ENCODE measurements at regions of chr17 and their contacts with region 1.

Region 1: GRCh38 chr17:63549946-63550807 is at the start of gene DCAF7:
- H3K4me3 Mint-ChIP-seq: peak within 1 kb of the TSS; percentile 98
- H3K27ac Mint-ChIP-seq: peak within 1 kb of the TSS; percentile 97
- H3K4me1 Mint-ChIP-seq: peaks cover 44% of the 10 kb centered on the region
- H3K27me3 Mint-ChIP-seq: no peaks in the 10 kb centered on the region

Region 2: DNA sequence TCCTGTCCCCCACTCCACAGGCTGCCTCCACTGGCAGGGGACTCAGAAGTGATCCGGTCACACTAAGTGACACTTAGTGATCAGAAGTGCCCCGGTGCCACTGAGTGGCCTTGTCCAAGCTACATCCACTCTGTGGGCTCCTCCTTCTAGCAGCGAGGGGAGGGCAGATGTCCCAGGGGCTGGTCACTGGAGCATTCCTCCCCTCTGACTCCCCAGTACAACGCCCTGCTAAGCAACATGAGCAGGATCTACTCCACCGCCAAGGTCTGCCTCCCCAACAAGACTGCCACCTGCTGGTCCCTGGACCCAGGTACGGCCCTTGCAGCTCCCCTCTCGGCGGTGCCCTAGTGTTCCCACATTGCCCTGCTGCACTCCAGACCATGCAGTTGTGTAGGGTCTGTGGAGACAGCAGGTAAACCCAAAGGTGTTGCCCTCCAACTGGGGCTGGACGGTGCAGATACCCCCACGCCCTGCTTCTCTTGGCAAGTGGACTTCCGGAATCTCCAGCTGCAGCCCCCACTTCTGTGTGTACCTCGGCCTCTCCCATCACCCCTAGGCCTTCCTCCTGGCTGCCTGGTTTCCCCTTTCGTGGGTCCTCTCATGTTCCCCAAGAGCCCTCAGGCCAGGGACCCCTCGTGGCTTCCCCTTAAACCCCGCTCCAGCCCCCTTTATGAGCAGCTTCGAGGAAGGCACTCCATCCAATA is 71.2 kb before region 1 on chr17:
- intact Hi-C with region 1: no loop called
- H3K4me3 Mint-ChIP-seq: peak overlapping the region; percentile 97
- H3K27ac Mint-ChIP-seq: peak overlapping the region; percentile 78
- H3K4me1 Mint-ChIP-seq: peaks cover 80% of the 10 kb centered on the region
- H3K27me3 Mint-ChIP-seq: peaks cover 18% of the 10 kb centered on the region

Region 3: GRCh38 chr17:63503334-63503692 is 46.9 kb before region 1 on chr17:
- intact Hi-C with region 1: loop called (anchors 5 kb)
- H3K4me3 Mint-ChIP-seq: no peak overlapping the region
- H3K27ac Mint-ChIP-seq: peak overlapping the region; percentile 83
- H3K4me1 Mint-ChIP-seq: peaks cover 66% of the 10 kb centered on the region
- H3K27me3 Mint-ChIP-seq: peaks cover 5% of the 10 kb centered on the region

Region 4: DNA sequence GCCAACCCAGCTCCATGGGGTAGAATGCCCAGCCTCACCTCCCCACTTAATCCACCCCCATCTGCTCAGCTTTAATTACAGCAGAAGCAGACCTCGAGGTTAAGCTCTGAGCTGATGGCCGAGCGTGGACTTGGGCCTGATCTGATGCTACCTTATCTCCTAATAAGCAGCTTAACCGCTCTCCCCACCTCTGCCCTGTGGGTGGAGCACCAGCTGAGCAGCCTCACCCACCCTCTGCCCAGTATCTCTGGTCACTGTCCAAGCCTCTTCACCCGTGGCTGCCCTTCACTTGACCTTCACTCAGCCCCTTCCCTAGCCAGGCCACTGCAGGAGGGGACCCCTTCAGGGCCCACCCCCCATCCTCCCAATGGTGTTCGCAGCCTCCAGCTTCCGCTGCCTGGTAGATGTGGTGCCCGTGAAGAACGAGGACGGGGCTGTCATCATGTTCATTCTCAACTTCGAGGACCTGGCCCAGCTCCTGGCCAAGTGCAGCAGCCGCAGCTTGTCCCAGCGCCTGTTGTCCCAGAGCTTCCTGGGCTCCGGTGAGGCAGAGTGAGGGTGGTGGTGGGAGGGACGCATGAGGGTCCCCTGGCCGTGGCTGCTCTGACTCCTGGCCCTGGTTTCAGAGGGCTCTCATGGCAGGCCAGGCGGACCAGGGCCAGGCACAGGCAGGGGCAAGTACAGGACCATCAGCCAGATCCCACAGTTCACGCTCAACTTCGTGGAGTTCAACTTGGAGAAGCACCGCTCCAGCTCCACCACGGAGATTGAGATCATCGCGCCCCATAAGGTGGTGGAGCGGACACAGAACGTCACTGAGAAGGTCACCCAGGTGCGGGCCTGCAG is 20.2 kb before region 1 on chr17:
- intact Hi-C with region 1: no loop called
- H3K4me3 Mint-ChIP-seq: no peak overlapping the region
- H3K27ac Mint-ChIP-seq: no peak overlapping the region
- H3K4me1 Mint-ChIP-seq: no peaks in the 10 kb centered on the region
- H3K27me3 Mint-ChIP-seq: peaks cover 26% of the 10 kb centered on the region

Region 5: DNA sequence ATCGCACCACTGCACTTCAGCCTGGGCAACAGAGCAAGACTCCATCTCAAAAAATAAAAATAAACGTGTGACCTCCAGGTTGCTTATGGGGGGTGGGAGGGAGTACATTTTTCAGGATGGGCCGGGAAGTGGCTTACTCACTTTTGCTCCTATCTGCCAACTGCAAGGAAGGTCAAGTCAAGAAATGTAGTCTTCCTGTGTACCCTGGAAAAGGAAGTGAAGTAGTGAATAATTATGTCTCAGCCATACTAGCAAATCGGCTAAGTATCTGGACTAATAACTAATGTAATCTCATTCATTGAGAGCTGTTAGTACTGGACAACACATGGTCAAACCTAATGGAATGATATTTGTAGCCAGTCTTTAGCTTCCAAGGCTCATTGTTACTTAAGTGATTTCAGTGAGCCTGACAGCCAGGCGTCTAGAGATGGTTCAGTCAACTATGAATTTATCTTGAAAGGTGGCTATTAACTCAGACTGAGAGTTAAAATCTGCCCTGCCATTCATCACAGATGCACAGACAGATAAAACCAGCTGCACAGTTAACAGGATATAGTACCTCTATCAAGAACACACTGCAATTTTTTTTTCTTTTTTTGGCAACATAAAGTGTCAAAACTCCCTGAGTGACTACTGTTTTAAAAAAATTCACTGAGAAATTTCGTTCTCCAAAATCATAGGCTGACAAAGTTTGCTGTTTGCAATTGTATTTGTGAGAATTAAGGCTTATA is 46.8 kb after region 1 on chr17:
- intact Hi-C with region 1: loop called (anchors 5 kb)
- H3K4me3 Mint-ChIP-seq: no peak overlapping the region
- H3K27ac Mint-ChIP-seq: no peak overlapping the region
- H3K4me1 Mint-ChIP-seq: peaks cover 8% of the 10 kb centered on the region
- H3K27me3 Mint-ChIP-seq: no peaks in the 10 kb centered on the region